HepG2 (cell line): ENCODE measurements at regions of chr20 and their contacts with region 1.

Region 1: DNA sequence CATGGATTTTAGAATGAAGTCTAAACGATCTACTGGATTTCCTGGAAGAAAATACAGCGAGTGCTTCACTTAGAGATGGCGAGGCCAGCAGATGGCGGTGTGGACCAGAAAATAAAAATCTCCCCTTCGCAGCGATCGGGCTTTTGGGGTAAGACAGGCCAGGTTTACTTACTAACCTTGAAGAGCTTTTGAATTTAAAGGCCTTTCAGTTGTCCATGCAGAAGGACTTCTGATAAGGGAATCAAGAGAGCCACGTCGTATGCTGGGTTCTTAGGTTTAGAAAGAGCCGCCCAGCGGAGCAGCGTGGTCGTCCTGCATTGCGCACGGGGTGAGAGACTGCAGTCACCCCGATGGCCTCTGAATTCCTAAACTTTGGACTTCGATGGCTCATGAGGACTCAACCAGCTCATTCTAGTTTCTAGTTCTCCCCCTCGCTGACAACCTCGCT is 125.2 kb upstream of the RALGAPA2 start:
- DNase-seq: peak; percentile 60
- ATAC-seq: peak; percentile 89
- H3K4me3 ChIP-seq: peak overlapping the region in 2 of 3 experiments; percentile 18 to 57; a peak in 3 of 6 replicates
- H3K27ac ChIP-seq: no peak overlapping the region
- H3K4me1 ChIP-seq: peaks cover 7% of the 10 kb centered on the region
- H3K27me3 ChIP-seq: peaks cover 5 to 17% of the 10 kb centered on the region in 2 experiments; a peak in 4 of 5 replicates
- CTCF ChIP-seq: peak; percentile 91
- EP300 ChIP-seq: no peak
- POLR2A ChIP-seq: no peak
- RAD21 ChIP-seq: peak; percentile 83

Region 2: DNA sequence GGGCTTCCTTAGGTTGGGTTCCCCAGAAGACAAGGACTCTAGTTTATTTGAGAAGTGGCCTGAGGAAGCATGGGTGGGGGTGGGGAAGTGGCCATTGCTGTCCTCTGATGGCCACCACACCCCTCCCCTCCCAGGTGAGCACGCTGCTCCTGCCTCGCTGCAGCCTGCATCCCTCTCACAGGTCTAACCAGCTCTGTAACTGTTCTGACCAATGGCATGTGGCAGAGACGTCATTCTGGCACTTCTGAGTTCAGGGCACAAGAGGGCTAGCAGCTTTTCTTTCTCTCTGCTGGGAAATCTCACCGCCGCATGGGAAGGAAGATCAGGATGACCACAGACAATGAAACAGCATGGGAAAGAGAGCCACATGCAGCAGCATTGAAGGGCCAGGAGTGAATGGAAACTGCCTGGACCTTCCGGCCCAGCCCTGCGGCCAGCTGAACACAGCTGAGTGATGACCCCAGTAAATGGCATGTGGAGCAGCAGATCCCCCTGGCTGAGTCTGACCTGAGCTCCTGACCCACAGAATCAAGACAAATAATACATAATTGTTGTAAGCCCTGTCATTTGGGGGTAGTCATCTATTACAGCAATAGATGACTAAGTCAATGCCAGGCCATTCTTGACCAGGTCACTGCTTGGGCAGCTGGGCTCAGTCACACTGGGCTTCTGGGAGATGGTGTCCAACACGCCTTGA is 88.8 kb after region 1 on chr20:
- CTCF ChIA-PET with region 1: no interaction called
- POLR2A ChIA-PET with region 1: no interaction called
- in situ Hi-C with region 1: no loop called
- intact Hi-C with region 1: no loop called
- DNase-seq: no peak
- ATAC-seq: no peak
- H3K4me3 ChIP-seq: no peak overlapping the region
- H3K27ac ChIP-seq: no peak overlapping the region
- H3K4me1 ChIP-seq: peaks cover 9% of the 10 kb centered on the region; the same call in 1 of the 2 replicates
- H3K27me3 ChIP-seq: peaks cover 0 to 6% of the 10 kb centered on the region in 2 experiments; a peak in 1 of 5 replicates
- CTCF ChIP-seq: no peak
- EP300 ChIP-seq: no peak
- POLR2A ChIP-seq: no peak
- RAD21 ChIP-seq: no peak

Region 3: DNA sequence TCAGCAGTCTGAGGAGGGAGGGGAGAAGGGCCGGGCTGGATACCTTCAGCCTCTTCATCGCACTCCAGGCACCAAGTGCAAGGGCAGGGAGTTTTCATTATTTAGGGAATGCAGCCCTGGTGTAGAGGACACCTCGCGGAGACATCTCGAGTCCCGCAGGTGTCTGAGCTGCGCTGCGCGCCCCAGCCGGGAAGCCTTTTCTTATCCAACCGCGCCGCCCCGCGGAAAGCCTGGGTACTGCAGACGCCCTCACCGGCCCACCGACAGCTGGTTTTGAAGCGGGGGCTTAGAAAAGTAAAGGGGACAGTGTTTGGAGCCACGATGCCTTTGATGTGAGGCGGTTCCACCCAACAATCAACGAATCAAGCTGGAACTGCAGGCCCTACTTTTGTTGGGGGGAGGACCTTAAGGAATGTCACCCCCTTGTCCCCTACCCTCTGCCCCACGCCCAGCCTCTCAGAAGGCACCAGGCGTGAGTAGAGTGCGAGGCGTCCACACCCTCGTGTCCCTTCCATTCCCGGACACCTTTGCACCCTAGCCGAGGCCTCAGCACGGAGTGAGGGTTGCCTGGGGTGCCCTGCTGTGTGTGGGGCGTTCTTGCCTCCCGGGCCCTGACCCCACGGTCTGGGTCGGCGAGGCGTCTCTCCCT is 667.7 kb after region 1 on chr20:
- CTCF ChIA-PET with region 1: interaction called, 40 read pairs
- POLR2A ChIA-PET with region 1: no interaction called
- in situ Hi-C with region 1: loop called (anchors 5 kb)
- intact Hi-C with region 1: loop called (anchors 1 kb)
- DNase-seq: peak; percentile 55
- ATAC-seq: peak; percentile 75
- H3K4me3 ChIP-seq: peak overlapping the region in 2 of 3 experiments; percentile 19 to 63; a peak in 3 of 6 replicates
- H3K27ac ChIP-seq: no peak overlapping the region
- H3K4me1 ChIP-seq: peaks cover 12% of the 10 kb centered on the region
- H3K27me3 ChIP-seq: peaks cover 10 to 65% of the 10 kb centered on the region in 2 experiments
- CTCF ChIP-seq: peak; percentile 99
- EP300 ChIP-seq: no peak
- POLR2A ChIP-seq: no peak
- RAD21 ChIP-seq: peak; percentile 100

Region 4: DNA sequence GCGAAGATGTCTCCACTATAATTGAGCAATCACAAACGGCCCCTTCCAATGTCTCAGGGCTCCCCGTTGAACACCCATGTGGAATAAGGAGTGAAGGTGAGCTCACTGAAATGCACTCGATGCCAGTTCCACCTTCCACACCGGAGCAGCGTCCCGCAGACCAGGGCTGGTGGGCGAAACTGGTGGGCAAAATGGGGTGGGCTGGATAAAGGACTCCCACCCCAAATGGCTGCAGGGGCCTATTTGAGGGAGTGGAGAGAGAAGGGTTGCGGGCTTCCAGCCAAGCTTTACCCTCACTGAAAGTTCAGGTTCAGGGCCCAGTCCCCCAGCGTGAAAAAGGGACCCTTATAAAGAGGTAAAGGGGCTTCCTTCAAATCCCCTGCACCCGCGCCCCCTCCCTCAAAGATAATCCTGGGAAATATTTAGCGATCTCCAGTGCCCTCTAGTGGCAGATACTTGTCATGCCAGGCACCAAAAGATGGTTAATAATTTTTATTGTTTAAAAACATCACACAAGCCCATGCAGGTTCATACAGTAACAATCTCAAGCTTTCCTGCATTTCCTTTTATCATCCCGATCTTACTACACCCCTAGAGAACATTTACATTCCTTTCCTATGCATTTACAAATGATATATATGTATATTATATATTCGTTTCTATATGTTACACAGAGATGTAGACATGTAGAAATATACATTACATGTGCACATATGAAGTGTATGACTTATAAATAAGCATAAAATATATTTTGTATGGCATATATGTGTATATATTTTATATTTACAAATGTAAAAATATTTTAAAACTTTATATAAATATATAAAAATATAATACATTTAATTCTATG is 734.5 kb after region 1 on chr20:
- CTCF ChIA-PET with region 1: interaction called, 10 read pairs
- POLR2A ChIA-PET with region 1: no interaction called
- in situ Hi-C with region 1: no loop called
- intact Hi-C with region 1: loop called (anchors 2 kb)
- DNase-seq: peak; percentile 23
- ATAC-seq: peak; percentile 48
- H3K4me3 ChIP-seq: no peak overlapping the region
- H3K27ac ChIP-seq: no peak overlapping the region
- H3K4me1 ChIP-seq: no peaks in the 10 kb centered on the region
- H3K27me3 ChIP-seq: peaks cover 4 to 37% of the 10 kb centered on the region in 2 experiments; a peak in 3 of 5 replicates
- CTCF ChIP-seq: peak; percentile 86
- EP300 ChIP-seq: no peak
- POLR2A ChIP-seq: no peak
- RAD21 ChIP-seq: peak; percentile 79

Region 5: DNA sequence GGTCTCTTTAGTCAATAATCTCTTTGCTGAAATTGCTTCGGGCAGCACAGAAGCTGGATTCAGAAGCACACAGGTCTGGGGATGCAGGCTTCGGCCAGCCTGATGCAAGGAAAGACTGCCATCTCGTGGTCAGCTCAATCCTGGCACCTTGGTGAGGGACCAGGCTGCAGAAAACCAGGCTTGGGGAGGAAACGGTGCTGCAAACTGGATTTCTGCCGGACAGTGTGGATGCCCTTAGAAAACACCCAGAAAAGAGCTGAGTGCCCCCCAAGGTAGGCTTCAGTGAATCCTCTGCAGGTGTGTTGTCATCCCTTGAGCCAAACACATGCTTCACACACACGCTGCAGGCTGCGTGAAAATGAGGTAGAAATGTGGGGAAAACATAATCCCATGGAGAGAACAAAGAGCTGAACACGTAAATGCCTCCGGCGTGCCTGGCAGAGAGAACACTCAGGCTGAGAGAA is 778.1 kb after region 1 on chr20:
- CTCF ChIA-PET with region 1: interaction called, 22 read pairs
- POLR2A ChIA-PET with region 1: no interaction called
- in situ Hi-C with region 1: loop called (anchors 10 kb)
- intact Hi-C with region 1: loop called (anchors 1 kb)
- DNase-seq: peak; percentile 66
- ATAC-seq: peak; percentile 98
- H3K4me3 ChIP-seq: no peak overlapping the region
- H3K27ac ChIP-seq: no peak overlapping the region
- H3K4me1 ChIP-seq: no peaks in the 10 kb centered on the region
- H3K27me3 ChIP-seq: peaks cover 2 to 5% of the 10 kb centered on the region in 2 experiments; a peak in 3 of 5 replicates
- CTCF ChIP-seq: peak; percentile 95
- EP300 ChIP-seq: no peak
- POLR2A ChIP-seq: no peak
- RAD21 ChIP-seq: peak; percentile 79